ENCODE measurements at regions of chr15 and their contacts with region 1.

Region 1: GRCh38 chr15:31265871-31266711 is 60.5 kb upstream of the KLF13 start:
- DNase-seq: peak; percentile 86
- ATAC-seq: peak; percentile 65
- H3K4me3 ChIP-seq: peak overlapping the region; percentile 41; the same call in 1 of the 2 replicates
- H3K27ac ChIP-seq: peak overlapping the region; percentile 94
- H3K4me1 ChIP-seq: peaks cover 63% of the 10 kb centered on the region
- H3K27me3 ChIP-seq: no peaks in the 10 kb centered on the region
- CTCF ChIP-seq: 0 out of 6 replicates have a peak, but pooled peaks of 1 of the 3 experiments have one; percentile 6
- EP300 ChIP-seq: peak; percentile 89 to 93; a peak in 3 of 4 replicates
- POLR2A ChIP-seq: no peak; the same call in 1 of the 2 replicates
- RAD21 ChIP-seq: peak; percentile 32

Region 2: DNA sequence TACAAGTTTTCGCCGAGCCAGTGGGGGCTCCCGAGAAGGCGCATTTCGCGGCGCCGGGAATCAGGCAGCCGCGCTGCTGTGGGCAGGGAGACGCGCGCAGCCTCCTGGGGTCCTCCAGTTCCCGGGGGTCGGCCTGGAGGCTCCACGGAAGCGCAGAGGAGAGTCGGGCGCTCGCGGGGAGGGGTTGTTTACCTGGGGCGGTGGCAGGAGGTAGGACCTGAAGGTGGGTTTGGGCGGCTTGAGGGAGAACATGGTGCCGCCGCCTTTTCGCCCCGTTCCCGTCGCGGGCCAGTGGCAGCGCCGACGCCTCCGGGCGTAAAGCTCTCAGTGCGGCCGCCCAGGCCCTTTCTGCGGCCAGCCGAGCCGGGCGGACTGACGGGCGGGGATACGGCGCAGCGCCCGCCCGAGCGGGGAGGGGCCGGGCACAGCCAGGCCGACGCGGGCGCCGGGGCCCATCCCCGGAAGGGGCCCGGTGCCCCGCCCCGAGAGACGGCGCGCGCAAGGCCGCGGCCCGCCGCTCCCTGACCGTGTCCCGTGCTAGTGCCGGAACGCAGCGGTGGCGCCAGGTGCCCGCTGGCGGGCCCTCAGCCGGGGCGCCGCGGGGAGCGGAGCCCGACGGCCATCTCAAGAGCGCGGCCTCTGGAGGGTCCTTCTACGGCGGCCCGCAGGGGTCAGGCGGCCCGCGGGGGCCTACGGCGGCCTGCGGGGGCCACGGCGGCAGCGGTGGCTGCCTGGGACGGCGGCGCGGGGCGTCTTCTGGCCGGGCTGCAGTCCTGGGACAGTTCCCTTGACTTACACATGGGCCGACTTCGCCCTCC is 274.6 kb before region 1 on chr15 and contains the start of gene MTMR10:
- CTCF ChIA-PET with region 1: no interaction called
- POLR2A ChIA-PET with region 1: no interaction called
- RAD21 ChIA-PET with region 1: no interaction called
- SMC1A ChIA-PET with region 1: no interaction called
- in situ Hi-C with region 1: no loop called
- intact Hi-C with region 1: no loop called
- DNase-seq: no peak
- ATAC-seq: peak; percentile 96
- H3K4me3 ChIP-seq: peak within 1 kb of the TSS; percentile 99
- H3K27ac ChIP-seq: peak within 1 kb of the TSS; percentile 78
- H3K4me1 ChIP-seq: peaks cover 5% of the 10 kb centered on the region; the same call in 1 of the 2 replicates
- H3K27me3 ChIP-seq: no peaks in the 10 kb centered on the region
- CTCF ChIP-seq: no peak
- EP300 ChIP-seq: no peak
- POLR2A ChIP-seq: peak; percentile 94
- RAD21 ChIP-seq: 0 out of 2 replicates have a peak, but pooled peaks have one; percentile 4
- polyA plus RNA-seq, gene MTMR10: 1.9 to 3.6 TPM

Region 3: DNA sequence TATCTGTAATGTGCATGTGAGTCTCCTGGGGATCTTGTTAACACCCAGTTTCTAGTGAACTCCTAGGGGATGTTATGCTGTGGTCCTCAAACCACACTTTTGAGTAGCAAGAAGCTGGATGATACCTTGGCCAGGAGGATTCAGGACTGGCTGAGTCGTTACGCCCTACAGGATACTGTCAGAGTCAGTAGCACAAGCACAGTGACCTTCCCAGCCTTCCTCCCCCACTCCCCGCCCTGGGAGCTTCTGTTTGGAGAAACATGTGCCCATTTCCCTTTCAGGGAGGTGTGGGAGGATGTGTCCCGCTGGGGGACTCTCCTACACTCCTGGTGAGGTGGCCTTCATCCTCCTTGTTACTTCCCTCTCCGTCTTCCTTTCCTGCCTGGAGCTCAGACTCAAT is 88.1 kb before region 1 on chr15:
- CTCF ChIA-PET with region 1: no interaction called
- POLR2A ChIA-PET with region 1: no interaction called
- RAD21 ChIA-PET with region 1: no interaction called
- SMC1A ChIA-PET with region 1: no interaction called
- in situ Hi-C with region 1: no loop called
- intact Hi-C with region 1: no loop called
- DNase-seq: no peak
- ATAC-seq: peak; percentile 13; the same call in 2 of the 3 replicates
- H3K4me3 ChIP-seq: no peak overlapping the region
- H3K27ac ChIP-seq: no peak overlapping the region
- H3K4me1 ChIP-seq: peaks cover 22% of the 10 kb centered on the region
- H3K27me3 ChIP-seq: no peaks in the 10 kb centered on the region
- CTCF ChIP-seq: no peak
- EP300 ChIP-seq: no peak
- POLR2A ChIP-seq: no peak
- RAD21 ChIP-seq: no peak

Region 4: GRCh38 chr15:31200735-31201151 is 65.3 kb before region 1 on chr15:
- CTCF ChIA-PET with region 1: interaction called, 11 read pairs
- POLR2A ChIA-PET with region 1: no interaction called
- RAD21 ChIA-PET with region 1: interaction called, 4 read pairs
- SMC1A ChIA-PET with region 1: interaction called, 3 read pairs
- in situ Hi-C with region 1: no loop called
- intact Hi-C with region 1: no loop called
- DNase-seq: no peak
- ATAC-seq: peak; percentile 83
- H3K4me3 ChIP-seq: no peak overlapping the region
- H3K27ac ChIP-seq: no peak overlapping the region
- H3K4me1 ChIP-seq: peaks cover 30% of the 10 kb centered on the region
- H3K27me3 ChIP-seq: no peaks in the 10 kb centered on the region
- CTCF ChIP-seq: peak; percentile 61 to 88 (median 74)
- EP300 ChIP-seq: no peak
- POLR2A ChIP-seq: no peak
- RAD21 ChIP-seq: peak; percentile 79

Region 5: DNA sequence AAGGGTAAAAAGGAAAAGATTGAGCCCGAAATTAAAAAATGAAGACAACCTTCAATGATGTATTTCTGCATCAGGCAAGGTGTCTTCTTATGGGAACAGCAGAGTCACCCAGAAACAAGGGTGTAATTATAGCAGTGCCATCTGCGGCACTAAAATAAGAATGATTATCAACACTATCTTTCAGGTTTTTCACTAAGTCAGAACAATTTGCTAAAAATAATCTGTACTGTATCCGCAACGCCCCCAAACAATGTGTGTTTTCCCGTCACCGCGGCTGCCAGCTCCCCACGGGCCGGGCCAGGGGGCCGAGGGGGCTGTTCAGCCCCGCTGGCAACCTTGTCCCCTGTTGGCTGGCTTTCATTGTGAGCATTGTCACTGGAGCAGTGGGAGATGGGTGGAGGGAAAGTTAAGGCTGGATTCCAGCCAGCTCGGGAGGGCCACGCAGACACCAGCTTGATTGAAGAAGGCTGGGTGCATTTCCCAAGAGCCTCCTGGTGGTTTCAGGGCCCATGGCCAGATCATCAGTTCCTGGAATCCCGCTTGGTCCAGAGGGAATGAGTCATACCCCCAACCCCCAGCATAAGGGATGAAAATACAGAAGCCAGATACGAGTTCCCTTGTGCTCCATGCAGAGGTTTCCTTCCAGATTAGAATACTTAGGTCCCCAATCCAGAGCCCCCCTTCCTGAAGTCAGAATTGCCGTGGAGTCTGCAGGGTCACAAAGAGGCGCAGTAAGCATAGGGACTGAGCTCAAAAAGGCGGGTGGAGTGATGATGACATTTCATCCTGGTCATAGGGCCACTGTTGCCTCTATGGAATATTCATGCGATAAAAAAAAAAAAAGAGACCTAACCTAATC is 29.7 kb before region 1 on chr15:
- CTCF ChIA-PET with region 1: interaction called, 66 read pairs
- POLR2A ChIA-PET with region 1: interaction called, 111 read pairs
- RAD21 ChIA-PET with region 1: interaction called, 169 read pairs
- SMC1A ChIA-PET with region 1: interaction called, 152 read pairs
- in situ Hi-C with region 1: no loop called
- intact Hi-C with region 1: no loop called
- DNase-seq: no peak
- ATAC-seq: peak; percentile 82
- H3K4me3 ChIP-seq: no peak overlapping the region
- H3K27ac ChIP-seq: peak overlapping the region; percentile 92
- H3K4me1 ChIP-seq: peaks cover 44% of the 10 kb centered on the region
- H3K27me3 ChIP-seq: no peaks in the 10 kb centered on the region
- CTCF ChIP-seq: no peak
- EP300 ChIP-seq: peak; percentile 80 to 92
- POLR2A ChIP-seq: no peak
- RAD21 ChIP-seq: no peak

Region 6: GRCh38 chr15:31285772-31286261 is 19.7 kb after region 1 on chr15:
- CTCF ChIA-PET with region 1: interaction called, 7 read pairs
- POLR2A ChIA-PET with region 1: interaction called, 8 read pairs
- RAD21 ChIA-PET with region 1: interaction called, 58 read pairs
- SMC1A ChIA-PET with region 1: interaction called, 31 read pairs
- in situ Hi-C with region 1: no loop called
- intact Hi-C with region 1: no loop called
- DNase-seq: peak; percentile 49
- ATAC-seq: peak; percentile 95
- H3K4me3 ChIP-seq: no peak overlapping the region
- H3K27ac ChIP-seq: peak overlapping the region; percentile 48
- H3K4me1 ChIP-seq: no peaks in the 10 kb centered on the region
- H3K27me3 ChIP-seq: no peaks in the 10 kb centered on the region
- CTCF ChIP-seq: no peak
- EP300 ChIP-seq: peak in 1 of 2 experiments; percentile 48; a peak in 1 of 4 replicates
- POLR2A ChIP-seq: no peak
- RAD21 ChIP-seq: no peak

Region 7: DNA sequence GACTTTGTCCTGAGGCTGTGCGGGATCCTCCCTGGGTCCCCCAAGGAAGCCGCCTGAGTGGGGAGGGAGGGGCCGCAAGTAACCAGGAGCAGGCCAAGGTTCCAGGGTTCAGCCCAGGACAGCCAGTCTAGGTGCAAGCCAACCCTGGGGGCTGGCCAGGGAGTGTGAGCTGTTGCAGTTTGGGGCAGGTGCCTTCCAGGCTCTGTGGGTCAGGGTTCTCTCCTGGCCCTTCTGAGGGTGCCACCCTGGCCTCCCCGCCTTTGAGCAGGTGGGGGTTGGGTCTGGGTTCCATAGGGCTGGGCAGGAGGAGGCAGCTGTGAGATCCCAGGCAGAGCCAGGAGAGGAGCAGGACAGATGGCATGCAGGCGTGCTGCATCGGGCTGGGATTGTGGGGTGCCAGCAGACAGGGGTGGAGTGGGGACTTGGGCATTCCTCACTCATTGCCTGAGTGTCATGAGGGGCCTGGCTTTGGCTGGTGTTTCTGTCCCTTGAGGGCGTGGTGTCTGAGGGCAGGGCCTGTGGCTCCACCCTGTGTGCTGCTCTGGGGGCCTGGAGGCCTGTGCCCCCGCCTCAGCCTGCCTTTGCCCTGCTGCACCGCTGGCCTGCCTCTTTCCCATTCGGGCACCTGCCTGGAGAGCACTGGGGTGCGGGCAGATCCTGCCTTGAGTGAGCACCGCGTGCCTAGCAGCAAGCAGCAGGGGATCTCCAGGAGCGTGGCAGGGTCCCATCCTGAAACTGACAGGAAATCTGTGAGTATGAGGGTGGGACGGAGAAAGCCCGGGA is 78.9 kb after region 1 on chr15:
- CTCF ChIA-PET with region 1: no interaction called
- POLR2A ChIA-PET with region 1: interaction called, 3 read pairs
- RAD21 ChIA-PET with region 1: interaction called, 10 read pairs
- SMC1A ChIA-PET with region 1: interaction called, 21 read pairs
- in situ Hi-C with region 1: no loop called
- intact Hi-C with region 1: no loop called
- DNase-seq: no peak
- ATAC-seq: peak; percentile 68
- H3K4me3 ChIP-seq: peak overlapping the region; percentile 80
- H3K27ac ChIP-seq: peak overlapping the region; percentile 96
- H3K4me1 ChIP-seq: peaks cover 87% of the 10 kb centered on the region
- H3K27me3 ChIP-seq: no peaks in the 10 kb centered on the region
- CTCF ChIP-seq: no peak
- EP300 ChIP-seq: no peak
- POLR2A ChIP-seq: peak; percentile 65
- RAD21 ChIP-seq: no peak

Region 8: DNA sequence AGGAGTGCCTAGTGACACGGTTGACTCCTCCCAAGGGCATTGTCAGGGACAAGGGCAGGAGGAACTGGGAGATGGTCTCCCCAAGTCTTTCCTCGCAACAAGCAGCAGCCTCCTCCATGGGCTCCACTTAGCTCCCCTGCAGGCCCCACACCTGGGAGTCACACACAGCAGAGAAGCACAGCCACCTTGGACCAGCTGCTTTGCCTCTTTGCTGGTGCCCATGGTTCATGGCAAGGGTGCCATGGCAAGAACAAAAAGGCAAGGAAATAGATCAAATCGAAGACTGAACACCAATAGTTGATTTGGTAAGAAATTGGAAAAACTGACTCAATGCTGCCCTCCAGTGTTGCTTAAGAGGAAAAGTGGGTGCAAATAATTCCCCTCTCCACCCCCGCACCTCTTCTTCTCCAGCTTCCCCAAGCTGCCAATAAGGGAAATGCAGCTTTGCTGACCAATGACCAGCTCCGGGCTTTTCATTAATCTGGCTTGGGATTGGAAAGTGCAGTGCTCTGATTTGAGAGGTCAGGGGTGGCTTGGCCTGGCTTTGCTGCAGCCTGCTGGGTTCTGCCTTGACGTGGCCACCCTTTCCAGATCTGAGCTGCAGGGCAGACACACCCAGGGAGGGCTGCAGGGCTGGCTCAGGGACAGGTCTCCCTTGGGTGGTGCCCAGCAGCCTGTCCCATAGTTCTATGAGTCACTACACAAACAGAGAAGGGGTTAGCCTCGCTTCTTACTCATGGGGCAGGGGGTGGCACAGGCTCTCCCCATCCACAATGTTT is 222.5 kb after region 1 on chr15:
- CTCF ChIA-PET with region 1: interaction called, 42 read pairs
- POLR2A ChIA-PET with region 1: no interaction called
- RAD21 ChIA-PET with region 1: interaction called, 12 read pairs
- SMC1A ChIA-PET with region 1: interaction called, 8 read pairs
- in situ Hi-C with region 1: loop called (anchors 5 kb)
- intact Hi-C with region 1: no loop called
- DNase-seq: peak; percentile 78
- ATAC-seq: peak; percentile 73
- H3K4me3 ChIP-seq: no peak overlapping the region
- H3K27ac ChIP-seq: peak overlapping the region; percentile 49
- H3K4me1 ChIP-seq: peaks cover 18% of the 10 kb centered on the region
- H3K27me3 ChIP-seq: no peaks in the 10 kb centered on the region
- CTCF ChIP-seq: peak; percentile 71 to 93 (median 91)
- EP300 ChIP-seq: no peak
- POLR2A ChIP-seq: no peak
- RAD21 ChIP-seq: peak; percentile 84

Measured in GM12878 (cell line).